CD14-positive monocyte (primary cell): ENCODE measurements at regions of chr1 and their contacts with region 1.

Region 1: GRCh38 chr1:149997585-149998262 is 12.8 kb downstream of the OTUD7B start:
- DNase-seq: peak; percentile 85 to 97 (median 93)
- H3K4me3 ChIP-seq: peak overlapping the region in 1 of 3 experiments; percentile 39
- H3K4me3 Mint-ChIP-seq: peak overlapping the region; percentile 10 to 86
- H3K27ac ChIP-seq: no peak overlapping the region
- H3K27ac Mint-ChIP-seq: peak overlapping the region in 5 of 7 donors; percentile 29 to 90 (median 72)
- H3K4me1 ChIP-seq: peaks cover 19 to 24% of the 10 kb centered on the region in 2 donors
- H3K4me1 Mint-ChIP-seq: peaks cover 22% of the 10 kb centered on the region
- H3K27me3 ChIP-seq: peaks cover 94 to 95% of the 10 kb centered on the region in 2 donors
- H3K27me3 Mint-ChIP-seq: peaks cover 86 to 96% (median 94%) of the 10 kb centered on the region in 3 donors
- CTCF ChIP-seq: no peak

Region 2: DNA sequence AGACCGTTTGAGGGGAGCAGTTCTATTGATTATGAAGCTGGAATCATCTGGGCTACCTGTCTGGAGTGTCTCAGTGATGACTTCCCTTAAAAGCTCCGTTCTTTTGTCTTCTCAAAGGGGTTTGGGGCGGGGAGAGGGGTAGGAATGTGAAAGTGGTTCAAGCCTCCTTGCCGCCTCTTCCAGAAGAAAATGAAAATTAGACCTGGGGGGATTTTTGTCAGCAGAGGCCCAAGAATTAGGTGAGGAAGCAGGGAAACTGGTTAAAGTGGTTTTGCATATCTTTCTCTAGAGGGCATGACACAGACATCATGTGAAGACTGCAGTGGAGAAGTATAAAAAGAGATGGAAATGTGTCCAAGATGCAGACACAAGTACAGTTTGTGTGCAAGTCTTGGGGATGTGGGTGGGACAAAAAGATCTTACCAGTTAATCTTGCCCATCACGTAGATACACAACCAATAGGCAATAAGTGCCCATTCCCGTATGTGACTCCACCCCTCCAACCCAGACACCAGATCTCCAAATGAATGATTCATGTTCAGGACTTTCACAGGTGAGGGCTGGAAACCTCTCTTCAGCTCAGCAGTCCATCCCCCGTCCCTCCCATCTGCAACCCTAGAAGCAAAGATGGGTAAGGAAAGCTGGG is 60.5 kb before region 1 on chr1:
- intact Hi-C with region 1: loop called in 1 of 2 experiments (anchors 5 kb)
- DNase-seq: no peak
- H3K4me3 ChIP-seq: no peak overlapping the region
- H3K4me3 Mint-ChIP-seq: no peak overlapping the region
- H3K27ac ChIP-seq: no peak overlapping the region
- H3K27ac Mint-ChIP-seq: peak overlapping the region in 5 of 7 donors; percentile 11 to 90 (median 58)
- H3K4me1 ChIP-seq: peaks cover 37 to 61% of the 10 kb centered on the region in 2 donors
- H3K4me1 Mint-ChIP-seq: peaks cover 61% of the 10 kb centered on the region
- H3K27me3 ChIP-seq: no peaks in the 10 kb centered on the region
- H3K27me3 Mint-ChIP-seq: peaks cover 0 to 10% (median 0%) of the 10 kb centered on the region in 3 donors
- CTCF ChIP-seq: no peak

Region 3: DNA sequence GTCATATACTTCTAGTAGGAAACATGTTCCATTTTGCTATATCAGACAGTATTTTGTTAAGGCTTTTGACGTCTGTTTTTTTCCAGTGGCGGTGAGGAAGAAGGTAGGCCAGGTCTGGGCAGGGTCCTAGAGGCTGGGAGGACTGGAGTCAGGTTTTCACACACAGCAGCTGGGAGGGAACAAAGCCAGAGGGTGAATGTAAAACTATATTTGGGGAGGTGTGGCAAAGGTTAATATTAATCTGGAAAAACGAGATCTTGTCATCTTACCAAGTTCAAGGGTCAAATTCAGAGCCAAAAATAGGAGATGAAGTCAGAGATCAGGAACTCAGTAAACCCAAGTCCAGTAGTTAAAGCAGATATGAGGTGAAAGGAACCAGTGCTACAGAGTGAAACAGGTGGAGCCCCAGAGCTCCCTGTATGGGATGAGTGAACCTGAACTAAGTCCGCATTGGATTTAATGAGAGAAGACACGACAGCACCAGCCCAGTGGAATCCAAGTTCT is 23.5 kb after region 1 on chr1:
- intact Hi-C with region 1: loop called in 1 of 2 experiments (anchors 2 kb)
- DNase-seq: no peak
- H3K4me3 ChIP-seq: no peak overlapping the region
- H3K4me3 Mint-ChIP-seq: peak overlapping the region in 1 of 2 donors; percentile 75
- H3K27ac ChIP-seq: no peak overlapping the region
- H3K27ac Mint-ChIP-seq: no peak overlapping the region
- H3K4me1 ChIP-seq: no peaks in the 10 kb centered on the region
- H3K4me1 Mint-ChIP-seq: peaks cover 6% of the 10 kb centered on the region
- H3K27me3 ChIP-seq: peaks cover 91 to 99% of the 10 kb centered on the region in 2 donors
- H3K27me3 Mint-ChIP-seq: peaks cover 85 to 95% (median 89%) of the 10 kb centered on the region in 3 donors
- CTCF ChIP-seq: no peak